ENCODE measurements at regions of chr3 and their contacts with region 1.

Region 1: DNA sequence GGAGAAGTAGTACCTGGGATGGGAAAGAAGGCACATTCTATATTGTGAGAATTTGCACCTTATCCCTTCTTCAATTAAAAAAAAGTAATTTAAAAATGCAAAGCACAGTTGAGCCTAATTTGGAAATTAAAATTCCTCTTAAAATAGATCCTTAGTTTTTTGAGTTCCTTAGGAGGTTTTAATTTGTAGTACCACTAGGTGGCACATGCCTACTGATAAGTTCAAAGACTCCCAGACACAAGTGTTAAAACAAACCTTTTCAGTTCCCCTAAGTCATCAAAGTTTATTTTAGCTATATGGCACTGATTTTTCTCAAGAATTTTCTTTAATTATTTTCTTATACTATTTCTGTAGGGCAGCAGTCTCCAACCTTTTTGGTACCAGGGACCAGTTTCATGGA is 127.6 kb upstream of the AZI2 start:
- DNase-seq: peak; percentile 54
- H3K4me3 Mint-ChIP-seq: no peak overlapping the region
- H3K27ac Mint-ChIP-seq: no peak overlapping the region
- H3K4me1 Mint-ChIP-seq: no peaks in the 10 kb centered on the region
- H3K27me3 Mint-ChIP-seq: no peaks in the 10 kb centered on the region
- CTCF ChIP-seq: peak; percentile 72

Region 2: GRCh38 chr3:28462866-28463265 is 13.3 kb before region 1 on chr3:
- CTCF ChIA-PET with region 1: interaction called, 10 read pairs
- POLR2A ChIA-PET with region 1: no interaction called
- intact Hi-C with region 1: no loop called
- DNase-seq: no peak
- H3K4me3 Mint-ChIP-seq: no peak overlapping the region
- H3K27ac Mint-ChIP-seq: no peak overlapping the region
- H3K4me1 Mint-ChIP-seq: no peaks in the 10 kb centered on the region
- H3K27me3 Mint-ChIP-seq: no peaks in the 10 kb centered on the region
- CTCF ChIP-seq: no peak

Region 3: GRCh38 chr3:28495301-28495700 is 19.1 kb after region 1 on chr3:
- CTCF ChIA-PET with region 1: no interaction called
- POLR2A ChIA-PET with region 1: no interaction called
- intact Hi-C with region 1: no loop called
- DNase-seq: no peak
- H3K4me3 Mint-ChIP-seq: no peak overlapping the region
- H3K27ac Mint-ChIP-seq: no peak overlapping the region
- H3K4me1 Mint-ChIP-seq: no peaks in the 10 kb centered on the region
- H3K27me3 Mint-ChIP-seq: no peaks in the 10 kb centered on the region
- CTCF ChIP-seq: no peak

Region 4: DNA sequence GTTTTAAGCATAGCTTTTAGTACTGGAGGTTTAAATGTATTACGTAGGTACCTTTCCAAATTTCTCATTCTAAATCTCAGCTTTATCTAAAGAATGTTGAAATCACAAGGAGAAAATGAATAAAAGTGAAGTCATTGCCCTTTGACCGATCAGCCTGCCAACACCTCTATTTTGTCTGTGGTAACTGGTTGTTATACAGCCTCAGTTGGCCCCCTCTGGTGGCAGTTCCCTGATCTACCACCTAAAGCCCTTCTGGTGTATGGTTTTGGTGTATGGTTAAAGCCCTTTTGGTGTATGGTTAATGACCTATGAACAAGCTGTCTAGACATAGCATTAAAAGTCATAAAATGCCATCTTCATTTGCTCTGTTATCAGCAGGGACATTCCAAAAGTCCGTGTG is 250.6 kb after region 1 on chr3:
- CTCF ChIA-PET with region 1: interaction called, 9 read pairs
- POLR2A ChIA-PET with region 1: interaction called, 3 read pairs
- intact Hi-C with region 1: loop called (anchors 1 kb)
- DNase-seq: peak; percentile 76
- H3K4me3 Mint-ChIP-seq: no peak overlapping the region
- H3K27ac Mint-ChIP-seq: no peak overlapping the region
- H3K4me1 Mint-ChIP-seq: no peaks in the 10 kb centered on the region
- H3K27me3 Mint-ChIP-seq: no peaks in the 10 kb centered on the region
- CTCF ChIP-seq: peak; percentile 56

Region 5: DNA sequence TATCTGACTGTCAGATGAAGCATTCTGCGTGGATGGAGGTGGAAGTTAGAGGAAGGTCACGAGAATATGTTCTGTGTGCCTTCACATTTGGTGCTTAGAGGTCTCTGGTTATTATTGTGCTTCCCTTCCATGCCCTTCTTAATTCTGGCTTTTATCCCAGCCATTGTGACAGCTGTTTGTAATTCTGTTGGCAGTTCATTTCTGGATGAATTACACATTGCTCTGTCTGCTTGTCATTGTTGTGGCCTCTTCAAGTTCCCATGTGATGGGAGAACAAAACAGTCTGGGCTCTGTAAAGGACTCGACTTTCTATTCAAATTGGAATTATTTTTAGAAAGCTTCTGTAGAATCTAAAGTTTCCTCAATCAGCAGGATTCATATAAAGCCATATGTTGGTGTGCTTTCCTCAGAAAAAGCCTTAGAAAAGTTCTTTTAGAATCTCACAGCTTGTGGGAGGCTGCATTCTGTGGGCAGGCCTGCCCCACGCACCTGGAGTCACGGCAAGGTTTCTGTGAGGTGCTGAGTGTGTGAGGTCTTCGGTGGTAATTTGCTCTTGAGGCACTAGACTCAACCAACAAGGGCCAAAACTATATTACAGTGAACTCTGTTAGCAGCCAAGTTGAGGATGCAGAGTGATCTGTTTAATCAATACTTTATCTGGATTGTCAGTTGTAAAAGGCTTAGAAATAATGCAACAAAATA is 269.9 kb after region 1 on chr3:
- CTCF ChIA-PET with region 1: no interaction called
- POLR2A ChIA-PET with region 1: no interaction called
- intact Hi-C with region 1: no loop called
- DNase-seq: peak; percentile 53
- H3K4me3 Mint-ChIP-seq: no peak overlapping the region
- H3K27ac Mint-ChIP-seq: peak overlapping the region; percentile 50
- H3K4me1 Mint-ChIP-seq: peaks cover 24% of the 10 kb centered on the region
- H3K27me3 Mint-ChIP-seq: no peaks in the 10 kb centered on the region
- CTCF ChIP-seq: no peak

Region 6: GRCh38 chr3:29764603-29765254 is 1288.5 kb after region 1 on chr3:
- CTCF ChIA-PET with region 1: interaction called, 4 read pairs
- POLR2A ChIA-PET with region 1: no interaction called
- intact Hi-C with region 1: loop called (anchors 5 kb)
- DNase-seq: peak; percentile 94
- H3K4me3 Mint-ChIP-seq: no peak overlapping the region
- H3K27ac Mint-ChIP-seq: peak overlapping the region; percentile 35
- H3K4me1 Mint-ChIP-seq: peaks cover 17% of the 10 kb centered on the region
- H3K27me3 Mint-ChIP-seq: no peaks in the 10 kb centered on the region
- CTCF ChIP-seq: peak; percentile 79

Region 7: GRCh38 chr3:30012941-30013543 is 1536.8 kb after region 1 on chr3:
- CTCF ChIA-PET with region 1: no interaction called
- POLR2A ChIA-PET with region 1: no interaction called
- intact Hi-C with region 1: loop called (anchors 10 kb)
- DNase-seq: peak; percentile 82
- H3K4me3 Mint-ChIP-seq: no peak overlapping the region
- H3K27ac Mint-ChIP-seq: no peak overlapping the region
- H3K4me1 Mint-ChIP-seq: no peaks in the 10 kb centered on the region
- H3K27me3 Mint-ChIP-seq: no peaks in the 10 kb centered on the region
- CTCF ChIP-seq: peak; percentile 53

Measured in MCF 10A (cell line).